Activated B cell treated with CpG ODN at 0.5 μM for 24 hours (primary cell): ENCODE measurements at regions of chr11 and their contacts with region 1.

Region 1: DNA sequence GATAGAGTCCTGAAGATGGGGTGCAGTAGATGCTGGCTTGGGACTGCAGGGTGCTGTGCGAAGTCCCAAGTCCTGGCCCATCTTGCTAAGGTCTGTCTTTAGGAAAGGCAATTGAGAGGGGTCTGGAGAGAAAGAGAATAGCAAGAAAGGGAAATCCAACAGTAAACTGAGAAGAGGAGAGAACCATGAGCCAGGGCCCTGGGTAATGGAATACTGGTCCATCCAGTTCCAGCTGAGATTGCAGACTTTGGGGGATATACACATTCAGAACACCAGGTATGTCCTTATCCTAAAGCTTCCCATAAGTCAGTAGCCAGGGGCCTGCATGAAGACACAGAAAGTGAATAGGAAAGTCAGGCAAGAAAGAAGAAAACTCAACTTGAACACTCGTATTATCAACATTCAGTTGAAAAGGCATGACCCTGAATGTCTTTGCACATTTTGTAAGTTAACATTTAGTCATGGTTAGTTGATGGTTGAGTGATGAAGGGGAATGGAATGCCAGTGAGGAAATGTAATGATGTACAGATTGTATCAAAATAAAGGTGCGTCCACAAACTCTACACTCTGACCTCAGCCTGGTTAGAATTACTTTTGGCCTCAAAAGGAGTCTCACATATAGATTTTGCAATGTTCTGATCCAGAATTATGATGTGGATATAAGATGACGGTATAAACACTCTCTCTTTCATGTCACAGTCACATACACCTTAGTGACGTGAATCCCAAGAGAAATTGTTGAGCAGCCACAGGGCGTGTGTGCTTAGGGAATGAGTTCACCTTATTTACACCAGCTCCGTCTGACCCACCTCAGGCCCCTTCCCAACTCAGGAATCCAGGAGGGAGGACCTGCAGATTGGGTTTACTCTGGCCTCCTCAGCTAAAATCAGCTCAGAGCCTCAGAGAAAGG is 100.3 kb downstream of the RDX start:
- DNase-seq: no peak
- ATAC-seq: no peak
- H3K4me3 Mint-ChIP-seq: no peak overlapping the region
- H3K27ac Mint-ChIP-seq: no peak overlapping the region
- H3K4me1 Mint-ChIP-seq: peaks cover 11% of the 10 kb centered on the region
- H3K27me3 Mint-ChIP-seq: peaks cover 23% of the 10 kb centered on the region
- CTCF ChIP-seq: no peak

Region 2: DNA sequence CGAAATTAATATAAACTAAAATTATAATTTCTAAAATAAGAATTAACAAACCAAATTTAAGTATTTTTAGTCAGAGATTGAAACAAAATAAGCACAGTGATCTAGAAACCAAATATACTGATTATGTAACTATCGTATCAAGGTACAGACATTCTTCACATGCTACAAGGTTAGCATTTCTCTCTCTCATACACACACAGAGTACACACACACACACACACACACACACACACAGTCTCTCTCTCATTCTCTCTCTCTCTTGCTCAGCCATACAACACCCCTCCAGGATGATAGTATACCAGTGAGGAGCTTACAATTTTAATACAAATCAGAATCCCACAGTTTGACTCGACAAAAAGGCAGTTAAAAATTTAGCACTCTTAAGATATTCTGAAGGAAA is 34.3 kb after region 1 on chr11:
- CTCF ChIA-PET with region 1: no interaction called
- POLR2A ChIA-PET with region 1: no interaction called
- intact Hi-C with region 1: no loop called
- DNase-seq: no peak
- ATAC-seq: no peak
- H3K4me3 Mint-ChIP-seq: no peak overlapping the region
- H3K27ac Mint-ChIP-seq: no peak overlapping the region
- H3K4me1 Mint-ChIP-seq: no peaks in the 10 kb centered on the region
- H3K27me3 Mint-ChIP-seq: no peaks in the 10 kb centered on the region
- CTCF ChIP-seq: no peak

Region 3: GRCh38 chr11:110366291-110366690 is 170.2 kb after region 1 on chr11:
- CTCF ChIA-PET with region 1: interaction called, 52 read pairs
- POLR2A ChIA-PET with region 1: no interaction called
- intact Hi-C with region 1: loop called (anchors 1 kb)
- DNase-seq: no peak
- ATAC-seq: no peak
- H3K4me3 Mint-ChIP-seq: no peak overlapping the region
- H3K27ac Mint-ChIP-seq: no peak overlapping the region
- H3K4me1 Mint-ChIP-seq: no peaks in the 10 kb centered on the region
- H3K27me3 Mint-ChIP-seq: peaks cover 4% of the 10 kb centered on the region
- CTCF ChIP-seq: no peak

Region 4: GRCh38 chr11:110376711-110377324 is 180.7 kb after region 1 on chr11:
- CTCF ChIA-PET with region 1: interaction called, 46 read pairs
- POLR2A ChIA-PET with region 1: no interaction called
- intact Hi-C with region 1: loop called (anchors 1 kb)
- DNase-seq: no peak
- ATAC-seq: peak; percentile 58
- H3K4me3 Mint-ChIP-seq: peak overlapping the region; percentile 13
- H3K27ac Mint-ChIP-seq: no peak overlapping the region
- H3K4me1 Mint-ChIP-seq: peaks cover 5% of the 10 kb centered on the region
- H3K27me3 Mint-ChIP-seq: no peaks in the 10 kb centered on the region
- CTCF ChIP-seq: no peak